Activated CD8-positive, alpha-beta memory T cell treated with anti-CD3 and anti-CD28 coated beads, Interleukin-2, amount 10 ng/mL, durations not matched to agents 7 days and 5 days (primary cell): ENCODE measurements at regions of chrX and their contacts with region 1.

Region 1: DNA sequence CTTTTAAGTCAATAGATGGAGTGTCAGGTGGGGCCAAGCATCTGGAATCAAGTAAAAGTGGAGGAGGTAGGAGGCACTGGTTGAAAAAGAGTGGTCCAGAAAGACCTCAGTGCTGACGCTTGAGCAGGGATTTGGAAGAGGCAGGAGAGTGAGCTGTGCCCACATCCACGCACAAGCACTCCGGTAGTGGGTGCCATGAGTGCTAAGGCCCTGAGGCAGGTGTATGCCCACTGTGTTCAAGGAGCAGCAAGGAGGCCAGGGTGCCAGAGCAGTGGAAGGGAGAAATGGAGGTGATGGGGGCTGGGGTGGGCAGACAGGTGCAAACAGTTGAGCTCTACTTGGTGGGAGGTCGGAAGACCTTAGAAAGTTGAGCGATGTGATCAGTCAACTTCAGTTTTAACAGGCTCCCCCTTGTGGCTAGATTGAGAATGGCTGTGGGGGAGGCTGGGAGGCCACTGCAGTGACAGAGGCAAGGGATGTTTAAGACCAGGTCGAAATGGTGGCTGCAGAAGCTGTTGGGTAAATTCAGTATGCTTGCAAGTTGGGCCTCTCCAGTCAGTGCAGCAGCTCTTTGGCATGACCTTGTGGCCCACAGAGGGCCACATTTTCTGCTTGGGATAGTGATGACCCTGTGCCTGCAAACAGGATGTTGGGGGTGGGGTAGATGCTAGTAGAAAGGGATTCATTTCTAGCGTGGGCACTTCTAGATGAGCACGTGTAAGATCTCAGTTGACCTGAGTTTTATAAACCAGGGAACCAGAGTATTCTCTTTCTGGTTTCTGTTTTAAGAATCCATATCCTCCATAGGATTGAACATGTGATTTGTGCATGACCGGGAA is 12.7 kb downstream of the TKTL1 start:
- DNase-seq: peak; percentile 88
- ATAC-seq: peak; percentile 81
- H3K4me3 Mint-ChIP-seq: no peak overlapping the region
- H3K27ac Mint-ChIP-seq: peak overlapping the region; percentile 81
- H3K4me1 Mint-ChIP-seq: peaks cover 51% of the 10 kb centered on the region
- H3K27me3 Mint-ChIP-seq: no peaks in the 10 kb centered on the region

Region 2: DNA sequence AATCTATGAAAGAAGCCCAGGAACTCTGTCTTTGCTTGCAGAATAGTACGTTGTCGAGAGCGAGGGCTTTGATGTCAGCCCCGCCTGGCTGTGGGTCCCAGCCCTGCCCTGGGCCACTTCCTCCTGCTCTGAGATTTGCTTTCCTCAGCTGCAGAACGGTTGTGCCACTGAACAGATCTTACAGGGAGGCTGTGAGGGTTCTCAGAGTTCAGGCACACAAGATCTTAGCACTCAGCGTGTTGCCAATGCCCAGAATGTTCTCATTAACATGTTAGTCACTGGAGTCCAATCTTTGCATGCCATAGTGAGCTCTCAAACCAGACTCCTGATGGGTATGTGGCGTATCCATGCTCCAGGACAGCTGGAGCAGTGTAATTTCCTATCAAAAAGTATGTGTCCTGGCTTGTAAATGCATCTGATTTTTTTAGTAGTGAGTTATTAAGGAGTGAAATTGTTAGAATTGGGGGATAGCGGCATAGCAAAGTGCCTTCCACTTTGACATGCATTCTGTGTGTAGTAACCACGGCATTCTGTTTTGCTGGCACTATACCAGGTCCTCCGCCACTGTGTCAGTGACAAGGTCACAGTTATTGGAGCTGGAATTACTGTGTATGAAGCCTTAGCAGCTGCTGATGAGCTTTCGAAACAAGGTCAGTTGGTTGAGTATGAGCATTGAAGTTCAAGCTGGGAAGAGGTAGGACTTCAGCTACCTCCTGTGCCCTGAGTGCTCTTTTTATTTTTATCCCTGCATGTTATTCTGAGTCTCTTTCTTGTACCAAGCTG is 18.9 kb after region 1 on chrX:
- CTCF ChIA-PET with region 1: interaction called, 12 read pairs
- DNase-seq: peak; percentile 65
- ATAC-seq: peak; percentile 90
- H3K4me3 Mint-ChIP-seq: peak overlapping the region; percentile 2
- H3K27ac Mint-ChIP-seq: peak overlapping the region; percentile 77
- H3K4me1 Mint-ChIP-seq: peaks cover 24% of the 10 kb centered on the region
- H3K27me3 Mint-ChIP-seq: no peaks in the 10 kb centered on the region